Naive thymus-derived CD4-positive, alpha-beta T cell (primary cell): ENCODE measurements at regions of chr13 and their contacts with region 1.

Region 1: DNA sequence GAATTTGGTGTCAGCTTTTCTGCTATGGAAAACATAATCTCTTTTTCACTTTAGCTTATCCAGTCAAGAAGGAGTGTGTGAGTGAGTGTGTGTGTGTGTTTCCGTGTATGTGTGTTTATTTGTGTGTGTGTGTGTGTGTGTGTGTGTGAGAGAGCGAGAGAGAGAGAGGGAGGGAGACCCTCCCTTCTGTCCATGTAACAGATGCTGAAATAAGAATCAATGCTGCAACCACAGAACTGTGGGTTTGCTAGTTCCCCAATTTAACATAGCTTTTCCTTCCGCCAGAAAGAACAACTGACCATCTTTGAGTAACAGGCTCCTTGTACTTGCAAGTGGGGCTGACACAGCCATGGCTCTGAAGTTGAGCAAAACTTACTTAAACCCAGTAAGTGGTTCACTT is 5.2 kb downstream of the LCP1 start:
- DNase-seq: no peak
- ATAC-seq: peak; percentile 41
- H3K4me3 ChIP-seq: peak overlapping the region; percentile 66
- H3K4me3 Mint-ChIP-seq: peak overlapping the region; percentile 80 to 99 (median 92)
- H3K27ac ChIP-seq: peak overlapping the region; percentile 82
- H3K27ac Mint-ChIP-seq: peak overlapping the region; percentile 73 to 95 (median 89)
- H3K4me1 ChIP-seq: peaks cover 59 to 60% of the 10 kb centered on the region in 2 donors
- H3K4me1 Mint-ChIP-seq: peaks cover 64 to 81% (median 72%) of the 10 kb centered on the region in 7 donors
- H3K27me3 ChIP-seq: no peaks in the 10 kb centered on the region
- H3K27me3 Mint-ChIP-seq: peaks cover 0 to 3% (median 0%) of the 10 kb centered on the region in 5 donors

Region 2: GRCh38 chr13:46143184-46143701 is 33.5 kb before region 1 on chr13:
- CTCF ChIA-PET with region 1: no interaction called
- POLR2A ChIA-PET with region 1: no interaction called
- intact Hi-C with region 1: no loop called
- DNase-seq: no peak
- ATAC-seq: no peak
- H3K4me3 ChIP-seq: no peak overlapping the region
- H3K4me3 Mint-ChIP-seq: no peak overlapping the region
- H3K27ac ChIP-seq: no peak overlapping the region
- H3K27ac Mint-ChIP-seq: peak overlapping the region; percentile 39 to 94 (median 69)
- H3K4me1 ChIP-seq: no peaks in the 10 kb centered on the region
- H3K4me1 Mint-ChIP-seq: peaks cover 2 to 26% (median 14%) of the 10 kb centered on the region in 7 donors
- H3K27me3 ChIP-seq: no peaks in the 10 kb centered on the region
- H3K27me3 Mint-ChIP-seq: no peaks in the 10 kb centered on the region

Region 3: GRCh38 chr13:46202188-46202795 is 25.5 kb after region 1 on chr13:
- CTCF ChIA-PET with region 1: interaction called, 4 read pairs
- POLR2A ChIA-PET with region 1: interaction called, 11 read pairs
- intact Hi-C with region 1: no loop called
- DNase-seq: peak in 5 of 9 donors; percentile 33 to 51 (median 49)
- ATAC-seq: peak; percentile 76
- H3K4me3 ChIP-seq: no peak overlapping the region
- H3K4me3 Mint-ChIP-seq: peak overlapping the region in 9 of 10 donors; percentile 8 to 78 (median 53)
- H3K27ac ChIP-seq: no peak overlapping the region
- H3K27ac Mint-ChIP-seq: peak overlapping the region; percentile 49 to 89 (median 76)
- H3K4me1 ChIP-seq: peaks cover 13 to 22% of the 10 kb centered on the region in 2 donors
- H3K4me1 Mint-ChIP-seq: peaks cover 9 to 58% (median 48%) of the 10 kb centered on the region in 7 donors
- H3K27me3 ChIP-seq: no peaks in the 10 kb centered on the region
- H3K27me3 Mint-ChIP-seq: no peaks in the 10 kb centered on the region

Region 4: DNA sequence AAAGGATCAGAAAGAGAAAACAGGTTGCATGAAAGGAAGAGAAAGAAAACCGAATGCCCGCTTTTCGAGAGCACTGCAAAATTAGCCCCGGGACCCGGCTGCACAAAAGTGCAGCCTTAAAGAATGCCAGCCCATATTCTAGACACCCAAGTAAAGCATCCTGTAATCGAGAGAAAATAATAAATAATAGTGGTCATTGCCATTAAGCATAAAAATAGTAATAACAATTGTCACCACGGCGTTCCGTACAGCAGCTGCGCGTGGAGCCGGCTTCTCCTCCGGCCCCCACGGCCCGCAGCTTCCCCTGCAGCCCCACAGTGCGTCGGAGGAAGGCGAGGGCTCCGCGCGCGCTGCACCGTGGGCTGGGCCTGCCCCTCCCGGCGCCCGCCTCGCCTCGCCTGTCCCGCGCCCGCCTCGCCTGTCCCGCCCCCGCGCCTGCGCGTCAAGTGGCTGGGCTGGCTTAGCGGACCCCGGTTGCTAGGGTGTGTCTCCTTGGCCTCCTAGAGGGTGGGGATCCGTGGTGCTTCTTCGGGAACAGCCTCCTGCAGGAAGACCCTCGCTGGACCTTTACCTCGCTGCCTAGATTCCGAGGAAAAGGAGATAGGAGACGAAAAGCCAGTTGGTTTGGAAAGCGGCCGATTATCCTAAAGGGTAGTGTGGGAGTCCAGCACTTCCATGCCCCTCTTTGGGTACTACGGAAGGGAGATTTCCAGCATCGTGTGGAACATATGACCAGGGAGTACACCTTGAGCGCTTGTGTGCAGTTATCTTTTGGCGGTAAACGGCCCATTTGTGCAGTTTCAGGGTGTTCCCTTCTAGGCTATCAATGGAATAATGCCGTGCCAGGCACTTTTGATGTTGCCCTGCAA is 35.0 kb after region 1 on chr13 and contains the start of gene LRRC63:
- CTCF ChIA-PET with region 1: interaction called, 3 read pairs
- POLR2A ChIA-PET with region 1: interaction called, 9 read pairs
- intact Hi-C with region 1: loop called in 1 of 2 experiments (anchors 5 kb)
- DNase-seq: peak; percentile 69 to 88 (median 80)
- ATAC-seq: peak; percentile 98
- H3K4me3 ChIP-seq: peak within 1 kb of the TSS; percentile 81
- H3K4me3 Mint-ChIP-seq: peak within 1 kb of the TSS; percentile 83 to 100 (median 93)
- H3K27ac ChIP-seq: peak within 1 kb of the TSS; percentile 88
- H3K27ac Mint-ChIP-seq: peak within 1 kb of the TSS; percentile 91 to 98 (median 94)
- H3K4me1 ChIP-seq: peaks cover 5 to 8% of the 10 kb centered on the region in 2 donors
- H3K4me1 Mint-ChIP-seq: peaks cover 7 to 37% (median 26%) of the 10 kb centered on the region in 7 donors
- H3K27me3 ChIP-seq: no peaks in the 10 kb centered on the region
- H3K27me3 Mint-ChIP-seq: peaks cover 0 to 6% (median 0%) of the 10 kb centered on the region in 5 donors
- total RNA-seq, gene LRRC63: 0.19 to 0.80 (median 0.49) TPM

Region 5: GRCh38 chr13:46295491-46296114 is 118.8 kb after region 1 on chr13:
- CTCF ChIA-PET with region 1: interaction called, 13 read pairs
- POLR2A ChIA-PET with region 1: interaction called, 29 read pairs
- intact Hi-C with region 1: loop called in 1 of 2 experiments (anchors 1 kb)
- DNase-seq: peak in 8 of 9 donors; percentile 28 to 90 (median 88)
- ATAC-seq: peak; percentile 94
- H3K4me3 ChIP-seq: peak overlapping the region; percentile 12
- H3K4me3 Mint-ChIP-seq: peak overlapping the region; percentile 4 to 87 (median 76)
- H3K27ac ChIP-seq: peak overlapping the region; percentile 77
- H3K27ac Mint-ChIP-seq: peak overlapping the region; percentile 92 to 99 (median 96)
- H3K4me1 ChIP-seq: peaks cover 35 to 52% of the 10 kb centered on the region in 2 donors
- H3K4me1 Mint-ChIP-seq: peaks cover 36 to 73% (median 68%) of the 10 kb centered on the region in 7 donors
- H3K27me3 ChIP-seq: no peaks in the 10 kb centered on the region
- H3K27me3 Mint-ChIP-seq: no peaks in the 10 kb centered on the region

Region 6: DNA sequence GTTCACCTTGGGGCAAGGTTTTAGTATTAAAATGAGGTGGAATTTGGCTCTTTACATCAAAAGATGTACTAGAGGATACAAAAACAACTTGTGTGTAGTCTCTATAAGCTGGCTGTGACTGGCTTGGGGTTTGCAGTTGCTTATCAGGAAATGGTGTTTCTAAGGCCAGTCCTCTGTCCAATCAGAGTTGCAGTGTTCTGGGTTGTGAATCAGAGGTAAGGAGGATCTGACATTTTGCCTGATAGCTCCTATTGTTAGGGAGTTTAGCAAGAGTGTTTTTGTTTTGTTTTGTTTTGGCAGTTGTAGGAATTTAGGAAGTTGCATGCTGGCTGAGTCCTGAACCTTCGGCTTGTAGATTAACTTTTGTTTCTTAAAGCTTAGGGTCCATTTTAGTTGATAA is 640.3 kb after region 1 on chr13:
- CTCF ChIA-PET with region 1: no interaction called
- POLR2A ChIA-PET with region 1: no interaction called
- intact Hi-C with region 1: no loop called
- DNase-seq: no peak
- ATAC-seq: peak; percentile 27
- H3K4me3 ChIP-seq: no peak overlapping the region
- H3K4me3 Mint-ChIP-seq: no peak overlapping the region
- H3K27ac ChIP-seq: no peak overlapping the region
- H3K27ac Mint-ChIP-seq: no peak overlapping the region
- H3K4me1 ChIP-seq: no peaks in the 10 kb centered on the region
- H3K4me1 Mint-ChIP-seq: peaks cover 0 to 3% (median 0%) of the 10 kb centered on the region in 7 donors
- H3K27me3 ChIP-seq: no peaks in the 10 kb centered on the region
- H3K27me3 Mint-ChIP-seq: peaks cover 3 to 25% (median 9%) of the 10 kb centered on the region in 5 donors